AG04449 (cell line): ENCODE measurements at regions of chr3 and their contacts with region 1.

Region 1: GRCh38 chr3:139561959-139562676 is 22.6 kb upstream of the RBP1 start:
- DNase-seq: no peak
- H3K4me3 ChIP-seq: no peak overlapping the region
- CTCF ChIP-seq: peak; percentile 62

Region 2: DNA sequence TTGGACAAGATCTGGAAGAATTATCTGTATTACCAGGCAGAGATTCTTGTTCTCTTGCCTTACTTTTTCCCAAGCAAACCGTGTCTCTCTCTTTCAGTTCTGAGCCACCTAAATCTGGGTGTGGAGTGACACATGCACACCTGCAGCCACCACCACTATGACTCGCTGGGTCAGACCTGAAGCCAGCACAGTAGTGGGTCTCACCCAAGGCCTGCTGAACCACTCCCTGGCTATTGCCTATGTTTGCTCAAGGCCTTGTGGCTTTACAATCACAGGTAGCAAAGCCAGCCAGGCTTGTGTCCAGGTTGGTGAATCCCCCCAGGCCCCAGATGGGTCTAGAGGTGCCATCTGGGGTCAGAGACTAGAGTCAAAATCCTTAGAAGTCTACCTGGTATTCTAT is 144.0 kb before region 1 on chr3:
- CTCF ChIA-PET with region 1: interaction called, 10 read pairs
- POLR2A ChIA-PET with region 1: no interaction called
- DNase-seq: no peak
- H3K4me3 ChIP-seq: no peak overlapping the region
- CTCF ChIP-seq: no peak

Region 3: DNA sequence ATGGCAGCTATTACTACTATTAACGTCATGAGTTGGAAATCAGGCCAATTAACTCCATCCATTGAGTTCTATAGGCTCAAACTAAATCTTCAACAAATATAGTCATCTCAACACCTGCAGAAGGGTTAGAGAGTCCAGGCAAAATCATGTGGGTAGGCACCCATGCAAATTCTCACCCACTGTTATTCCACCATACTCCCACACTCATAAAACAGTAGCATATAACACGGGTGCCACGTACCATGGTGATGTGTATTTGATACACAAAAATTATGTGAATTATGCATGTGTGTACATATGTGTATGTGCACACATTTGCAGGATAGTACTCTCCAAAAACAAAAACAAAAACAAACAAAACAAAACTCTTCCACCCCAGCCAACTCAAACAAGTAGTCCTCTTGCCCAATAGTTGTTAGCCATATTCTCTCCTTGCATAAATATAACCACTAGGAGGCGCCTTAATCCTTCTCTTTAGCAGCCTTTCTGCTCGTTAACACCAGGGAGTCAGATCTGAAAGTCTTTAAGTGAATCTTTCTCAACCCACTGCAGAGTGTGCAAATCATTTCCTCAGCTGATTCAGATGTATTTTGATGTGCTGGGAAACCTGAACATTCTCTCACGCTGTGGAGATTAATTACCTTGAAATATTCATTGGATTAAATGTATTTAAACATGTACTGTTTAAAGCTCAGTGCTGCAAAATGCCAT is 134.7 kb before region 1 on chr3:
- CTCF ChIA-PET with region 1: interaction called, 94 read pairs
- POLR2A ChIA-PET with region 1: no interaction called
- DNase-seq: peak; percentile 42
- H3K4me3 ChIP-seq: no peak overlapping the region
- CTCF ChIP-seq: peak; percentile 56

Region 4: GRCh38 chr3:139574026-139574947 is 12.2 kb after region 1 on chr3:
- CTCF ChIA-PET with region 1: interaction called, 11 read pairs
- POLR2A ChIA-PET with region 1: no interaction called
- DNase-seq: no peak
- H3K4me3 ChIP-seq: no peak overlapping the region
- CTCF ChIP-seq: no peak

Region 5: GRCh38 chr3:139588450-139588849 is 26.3 kb after region 1 on chr3:
- CTCF ChIA-PET with region 1: no interaction called
- POLR2A ChIA-PET with region 1: no interaction called
- DNase-seq: no peak
- H3K4me3 ChIP-seq: no peak overlapping the region
- CTCF ChIP-seq: no peak

Region 6: DNA sequence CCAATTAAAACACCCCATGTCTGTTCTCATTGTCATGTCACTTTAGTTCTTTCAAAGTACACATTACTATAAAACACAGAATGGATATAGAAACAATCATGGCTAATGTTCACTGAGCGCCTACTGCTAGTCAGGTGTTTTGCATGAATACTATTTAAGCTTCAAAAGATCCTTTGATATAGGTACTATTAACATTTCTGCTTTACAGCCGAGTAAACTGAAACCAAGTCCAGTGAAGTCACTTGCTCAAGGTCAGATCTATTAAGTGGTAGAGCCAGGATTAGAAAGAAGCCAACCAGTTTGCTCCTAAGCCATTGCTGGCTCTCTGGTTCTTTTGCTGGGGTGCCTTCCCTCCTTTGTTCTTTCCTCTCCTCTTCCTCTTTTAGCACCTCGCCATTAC is 148.1 kb after region 1 on chr3:
- CTCF ChIA-PET with region 1: no interaction called
- POLR2A ChIA-PET with region 1: no interaction called
- DNase-seq: no peak
- H3K4me3 ChIP-seq: no peak overlapping the region
- CTCF ChIP-seq: no peak